ENCODE measurements at regions of chr1 and their contacts with region 1.

Region 1: DNA sequence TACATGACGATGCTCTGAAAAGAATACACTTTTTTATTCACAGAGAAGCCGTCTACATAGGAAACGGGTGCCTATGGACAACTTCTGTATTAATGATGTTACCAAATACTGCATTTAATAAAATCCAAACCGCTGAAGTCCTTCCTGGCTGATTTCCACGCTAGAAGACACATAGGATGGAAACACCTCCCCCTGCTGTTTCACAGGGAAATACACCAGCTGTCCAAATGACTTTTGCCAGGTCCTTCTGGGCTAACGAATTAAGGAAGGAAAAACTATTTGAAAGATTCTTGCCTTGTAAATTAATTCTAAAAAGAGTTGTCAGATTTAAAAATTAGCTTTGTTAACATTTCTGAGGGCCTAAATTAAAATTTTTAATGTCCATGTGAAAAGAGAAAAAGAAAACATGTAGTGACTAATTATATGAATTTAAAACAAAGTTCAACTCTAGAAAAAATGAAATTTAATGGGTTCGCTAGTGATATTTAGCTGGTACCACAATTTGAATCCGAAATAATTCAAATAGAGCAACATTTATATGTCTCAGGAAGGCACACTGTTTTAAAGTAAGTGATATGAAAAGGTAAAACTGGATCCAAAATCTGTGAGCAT is 146.0 kb downstream of the RERE start:
- DNase-seq: no peak
- H3K4me3 ChIP-seq: no peak overlapping the region
- H3K27ac ChIP-seq: no peak overlapping the region
- H3K4me1 ChIP-seq: peaks cover 21 to 81% (median 41%) of the 10 kb centered on the region in 4 donors
- H3K27me3 ChIP-seq: no peaks in the 10 kb centered on the region
- CTCF ChIP-seq: peak; percentile 71 to 81 (median 75)
- EP300 ChIP-seq: no peak
- POLR2A ChIP-seq: no peak

Region 2: DNA sequence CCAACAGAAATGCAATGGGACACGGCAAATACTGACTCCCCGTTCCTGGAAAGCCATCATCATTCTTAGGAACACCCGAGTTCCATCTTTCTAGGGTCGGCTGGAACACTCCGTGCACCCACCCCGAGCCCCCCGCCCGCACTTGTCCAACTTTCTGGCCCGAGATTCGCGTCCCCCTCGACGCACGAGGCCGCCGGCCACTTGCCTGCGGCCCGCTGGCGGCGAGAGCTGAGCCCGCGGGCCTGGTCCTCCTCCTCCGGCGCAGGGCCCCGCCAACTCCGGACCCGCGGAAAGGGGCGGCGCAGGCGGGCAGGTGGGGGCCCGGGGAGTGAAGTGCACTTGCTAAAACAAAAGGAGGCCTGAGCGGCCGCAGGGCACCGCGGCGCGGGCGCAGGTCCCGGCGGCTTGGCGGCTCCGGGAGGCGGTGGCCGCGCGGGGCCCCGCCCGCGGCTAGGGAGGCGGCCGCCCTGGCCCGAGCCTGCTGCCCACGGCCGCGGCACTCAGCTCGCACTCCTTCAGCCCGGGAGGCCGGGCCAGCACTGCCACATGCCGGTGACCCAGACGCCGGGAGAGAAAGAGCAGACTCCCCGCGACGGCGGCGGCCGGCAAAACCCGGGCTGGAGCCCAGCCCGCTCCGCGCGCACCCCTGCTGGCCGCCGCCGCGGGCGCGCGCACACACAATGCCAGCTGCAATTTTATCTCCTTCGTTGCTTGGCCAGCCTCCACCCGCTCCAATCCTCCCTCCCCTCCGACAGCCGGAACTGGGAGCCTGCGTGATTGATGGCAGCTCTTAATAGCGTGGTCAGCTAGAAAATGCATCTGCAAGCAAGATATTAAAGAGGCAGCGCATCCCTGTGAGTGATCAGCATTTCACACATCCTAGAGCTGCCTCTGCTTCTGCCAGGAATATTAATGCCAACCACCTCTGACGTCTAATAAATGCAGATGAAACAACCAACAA is 31.7 kb after region 1 on chr1:
- in situ Hi-C with region 1: no loop called
- intact Hi-C with region 1: loop called (anchors 1 kb)
- DNase-seq: peak; percentile 93
- H3K4me3 ChIP-seq: peak overlapping the region; percentile 60 to 90 (median 72)
- H3K27ac ChIP-seq: peak overlapping the region; percentile 94 to 98 (median 96)
- H3K4me1 ChIP-seq: peaks cover 12 to 71% (median 33%) of the 10 kb centered on the region in 4 donors
- H3K27me3 ChIP-seq: no peaks in the 10 kb centered on the region
- CTCF ChIP-seq: peak in 3 of 5 experiments; percentile 7 to 44 (median 27)
- EP300 ChIP-seq: no peak
- POLR2A ChIP-seq: peak; percentile 45

Measured in transverse colon (tissue), 4 donors.